Activated CD4-positive, alpha-beta T cell treated with anti-CD3 and anti-CD28 coated beads for 36 hours (primary cell): ENCODE measurements at regions of chr12 and their contacts with region 1.

Region 1: DNA sequence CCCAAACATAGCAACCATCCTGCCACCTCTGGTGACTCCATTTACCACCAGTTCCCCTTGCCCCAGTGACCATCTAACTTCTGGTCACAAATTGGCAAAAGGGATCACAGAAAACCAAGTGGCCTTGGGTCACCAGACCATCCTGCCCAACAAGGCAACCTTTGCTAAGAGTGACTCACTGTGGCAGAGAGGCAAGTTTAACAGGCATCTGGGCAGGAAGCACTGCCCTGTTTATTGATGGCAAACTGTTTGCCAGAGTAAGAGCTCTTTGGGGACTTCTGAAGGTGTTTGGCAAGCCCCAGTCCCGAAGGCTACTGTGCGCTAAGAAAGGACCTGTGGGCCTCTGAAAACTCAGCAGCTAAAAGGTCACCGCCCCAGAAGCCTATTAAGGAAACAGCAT is 28.2 kb upstream of the TMEM233 start:
- DNase-seq: no peak
- ATAC-seq: no peak
- H3K4me3 Mint-ChIP-seq: no peak overlapping the region
- H3K27ac Mint-ChIP-seq: no peak overlapping the region
- H3K4me1 Mint-ChIP-seq: no peaks in the 10 kb centered on the region
- H3K27me3 Mint-ChIP-seq: peaks cover 7% of the 10 kb centered on the region

Region 2: GRCh38 chr12:119544765-119545625 is 20.4 kb before region 1 on chr12:
- CTCF ChIA-PET with region 1: interaction called, 11 read pairs
- POLR2A ChIA-PET with region 1: no interaction called
- intact Hi-C with region 1: no loop called
- DNase-seq: peak; percentile 72
- ATAC-seq: peak; percentile 64
- H3K4me3 Mint-ChIP-seq: no peak overlapping the region
- H3K27ac Mint-ChIP-seq: no peak overlapping the region
- H3K4me1 Mint-ChIP-seq: no peaks in the 10 kb centered on the region
- H3K27me3 Mint-ChIP-seq: peaks cover 29% of the 10 kb centered on the region